Ovary (tissue), 10 donors: ENCODE measurements at regions of chr6 and their contacts with region 1.

Region 1: DNA sequence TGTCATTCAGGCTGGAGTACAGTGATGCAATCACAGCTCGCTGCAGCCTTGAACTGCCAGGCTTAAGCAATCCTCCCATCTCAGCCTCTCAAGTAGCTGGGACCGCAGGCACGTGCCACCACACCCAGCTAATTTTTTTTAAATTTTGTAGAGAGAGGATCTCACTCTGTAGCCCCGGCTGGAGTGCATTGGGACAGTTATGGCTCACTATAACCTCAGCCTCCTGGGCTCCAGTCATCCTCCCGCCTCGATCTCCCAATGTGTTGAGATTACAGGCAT is 86.5 kb downstream of the SERAC1 start:
- DNase-seq: no peak
- H3K4me3 ChIP-seq: no peak overlapping the region
- H3K27ac ChIP-seq: no peak overlapping the region
- H3K4me1 ChIP-seq: peaks cover 5% of the 10 kb centered on the region
- H3K27me3 ChIP-seq: no peaks in the 10 kb centered on the region
- CTCF ChIP-seq: no peak
- EP300 ChIP-seq: no peak
- POLR2A ChIP-seq: no peak

Region 2: DNA sequence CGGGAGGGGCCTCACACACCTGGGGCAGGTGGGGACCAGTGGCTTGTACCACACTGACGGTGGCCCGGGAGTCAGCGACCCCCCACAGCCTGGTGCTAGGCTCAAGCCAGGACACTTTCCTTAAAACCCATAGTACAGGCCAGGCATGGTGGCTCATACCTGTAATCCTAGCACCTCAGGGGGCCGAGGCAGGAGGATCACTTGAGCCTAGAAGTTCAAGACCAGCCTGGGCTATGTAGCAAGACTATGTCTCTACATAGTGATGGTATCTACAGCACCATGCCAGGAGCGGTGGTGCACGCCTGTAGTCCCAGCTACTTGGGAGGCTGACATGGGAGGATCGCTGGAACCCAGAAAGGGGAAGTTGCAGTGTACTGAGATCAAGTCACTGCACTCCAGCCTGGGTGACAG is 58.8 kb before region 1 on chr6:
- intact Hi-C with region 1: loop called in 1 of 4 experiments (anchors 1 kb)
- DNase-seq: no peak
- H3K4me3 ChIP-seq: no peak overlapping the region
- H3K27ac ChIP-seq: no peak overlapping the region
- H3K4me1 ChIP-seq: peaks cover 11% of the 10 kb centered on the region
- H3K27me3 ChIP-seq: no peaks in the 10 kb centered on the region
- CTCF ChIP-seq: no peak
- EP300 ChIP-seq: no peak
- POLR2A ChIP-seq: no peak